Activated CD4-positive, alpha-beta T cell treated with anti-CD3 and anti-CD28 coated beads for 36 hours (primary cell): ENCODE measurements at regions of chr1 and their contacts with region 1.

Region 1: DNA sequence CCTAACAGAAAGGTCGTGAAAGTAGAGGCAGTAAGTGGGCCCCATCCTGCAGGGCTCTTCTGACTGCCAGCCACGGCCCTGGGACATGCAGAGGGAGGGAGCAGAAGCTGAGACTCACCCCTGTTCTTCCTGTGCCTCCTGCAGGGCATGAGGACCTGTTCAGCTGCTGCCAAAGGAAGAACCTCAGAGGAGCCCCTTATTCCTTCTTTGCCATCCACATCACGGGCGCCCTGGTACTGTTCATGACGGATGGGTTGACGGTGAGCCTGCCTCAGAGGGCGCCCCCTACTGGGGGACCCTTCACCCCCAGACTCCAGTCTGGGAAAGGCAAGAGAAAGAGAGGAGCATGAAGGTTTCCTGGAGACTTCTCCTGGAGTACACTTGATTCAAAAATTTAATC is 47.1 kb downstream of the ELK4 start:
- DNase-seq: peak; percentile 38
- ATAC-seq: no peak
- H3K4me3 Mint-ChIP-seq: no peak overlapping the region
- H3K27ac Mint-ChIP-seq: no peak overlapping the region
- H3K4me1 Mint-ChIP-seq: peaks cover 8% of the 10 kb centered on the region
- H3K27me3 Mint-ChIP-seq: no peaks in the 10 kb centered on the region

Region 2: DNA sequence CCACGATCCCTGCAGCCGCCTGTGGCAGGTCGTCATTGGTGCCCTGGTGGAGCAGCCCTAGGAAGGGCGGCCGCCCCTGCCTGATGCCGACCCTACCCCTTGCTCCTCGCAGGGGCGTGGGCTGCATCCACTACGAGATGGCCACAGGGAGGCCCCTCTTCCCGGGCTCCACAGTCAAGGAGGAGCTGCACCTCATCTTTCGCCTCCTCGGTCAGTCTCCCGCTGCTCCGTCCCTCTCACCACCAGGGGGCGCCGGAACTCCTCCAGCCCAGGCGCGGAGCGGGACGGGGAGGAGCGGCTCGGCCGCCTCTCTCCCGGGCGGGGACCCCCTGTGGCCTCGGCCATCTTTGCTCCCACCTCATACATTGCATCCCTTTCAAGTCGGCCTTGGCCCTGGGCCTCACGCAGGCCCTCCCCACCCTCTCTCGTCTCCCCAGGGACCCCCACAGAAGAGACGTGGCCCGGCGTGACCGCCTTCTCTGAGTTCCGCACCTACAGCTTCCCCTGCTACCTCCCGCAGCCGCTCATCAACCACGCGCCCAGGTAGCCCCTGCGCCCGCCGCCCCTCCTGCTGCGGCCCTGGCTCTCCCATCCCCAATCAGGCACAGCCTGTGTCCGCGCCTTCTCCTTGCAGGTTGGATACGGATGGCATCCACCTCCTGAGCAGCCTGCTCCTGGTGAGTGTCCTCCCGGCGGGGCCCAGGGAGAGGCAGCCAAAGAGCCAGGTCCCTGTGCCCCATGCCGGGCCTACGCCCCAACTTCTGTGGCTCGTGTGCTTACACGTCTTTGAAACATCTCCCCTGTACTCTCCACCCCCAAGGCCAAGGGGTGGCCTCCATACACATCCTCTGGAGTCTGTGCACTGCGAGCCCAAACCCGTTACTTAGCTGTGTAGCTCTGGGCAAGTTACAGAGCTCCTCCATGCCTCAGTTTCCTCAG is 55.6 kb before region 1 on chr1:
- CTCF ChIA-PET with region 1: interaction called, 5 read pairs
- POLR2A ChIA-PET with region 1: no interaction called
- intact Hi-C with region 1: loop called (anchors 2 kb)
- DNase-seq: peak; percentile 91
- ATAC-seq: peak; percentile 90
- H3K4me3 Mint-ChIP-seq: no peak overlapping the region
- H3K27ac Mint-ChIP-seq: no peak overlapping the region
- H3K4me1 Mint-ChIP-seq: no peaks in the 10 kb centered on the region
- H3K27me3 Mint-ChIP-seq: no peaks in the 10 kb centered on the region